Activated naive CD4-positive, alpha-beta T cell treated with anti-CD3 and anti-CD28 coated beads for 36 hours (primary cell): ENCODE measurements at regions of chr12 and their contacts with region 1.

Region 1: DNA sequence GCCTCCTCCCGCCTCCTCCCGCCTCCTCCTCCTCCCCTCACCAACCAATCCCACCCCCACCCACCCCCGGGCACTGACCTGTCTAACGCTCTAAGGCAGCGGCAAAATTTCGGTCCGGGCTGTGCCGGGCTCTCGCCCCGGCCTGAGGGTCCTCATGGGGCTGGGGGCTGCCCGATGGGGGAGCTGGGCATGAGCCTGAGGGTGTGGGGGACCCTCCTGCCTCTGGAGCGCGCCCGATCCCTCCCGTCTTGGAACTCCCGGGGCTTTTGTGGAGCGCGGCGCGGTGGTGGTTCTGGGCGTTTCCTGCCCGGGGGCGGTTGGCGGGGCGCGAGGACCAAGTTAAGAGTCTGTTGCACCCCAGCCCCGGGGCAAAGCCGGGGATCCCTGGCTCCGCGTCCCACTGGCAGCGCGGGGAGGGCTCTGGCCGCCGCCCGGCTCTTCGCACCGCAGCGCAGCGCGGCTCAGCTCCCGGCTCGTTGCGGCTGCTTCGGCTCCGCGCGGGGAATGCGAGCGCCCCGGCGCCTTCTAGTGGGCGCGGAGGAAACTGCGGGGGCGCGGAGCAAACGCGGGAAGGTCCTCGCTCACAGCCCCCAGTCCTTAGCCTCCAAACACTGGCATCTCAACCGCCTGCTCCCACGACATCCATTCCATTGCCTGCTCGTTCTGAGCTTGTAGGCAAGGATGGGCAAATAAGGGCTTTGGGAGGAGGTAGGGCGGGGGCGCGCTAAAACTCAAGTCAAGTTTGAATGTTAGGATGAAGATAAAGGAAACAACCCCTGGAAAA is at the start of gene B4GALNT1:
- DNase-seq: peak; percentile 65
- H3K4me3 Mint-ChIP-seq: peak within 1 kb of the TSS; percentile 73
- H3K27ac Mint-ChIP-seq: no peak within 1 kb of the TSS
- H3K4me1 Mint-ChIP-seq: peaks cover 8% of the 10 kb centered on the region
- H3K27me3 Mint-ChIP-seq: peaks cover 52% of the 10 kb centered on the region
- total RNA-seq, gene B4GALNT1: 1.4 to 1.8 TPM

Region 2: DNA sequence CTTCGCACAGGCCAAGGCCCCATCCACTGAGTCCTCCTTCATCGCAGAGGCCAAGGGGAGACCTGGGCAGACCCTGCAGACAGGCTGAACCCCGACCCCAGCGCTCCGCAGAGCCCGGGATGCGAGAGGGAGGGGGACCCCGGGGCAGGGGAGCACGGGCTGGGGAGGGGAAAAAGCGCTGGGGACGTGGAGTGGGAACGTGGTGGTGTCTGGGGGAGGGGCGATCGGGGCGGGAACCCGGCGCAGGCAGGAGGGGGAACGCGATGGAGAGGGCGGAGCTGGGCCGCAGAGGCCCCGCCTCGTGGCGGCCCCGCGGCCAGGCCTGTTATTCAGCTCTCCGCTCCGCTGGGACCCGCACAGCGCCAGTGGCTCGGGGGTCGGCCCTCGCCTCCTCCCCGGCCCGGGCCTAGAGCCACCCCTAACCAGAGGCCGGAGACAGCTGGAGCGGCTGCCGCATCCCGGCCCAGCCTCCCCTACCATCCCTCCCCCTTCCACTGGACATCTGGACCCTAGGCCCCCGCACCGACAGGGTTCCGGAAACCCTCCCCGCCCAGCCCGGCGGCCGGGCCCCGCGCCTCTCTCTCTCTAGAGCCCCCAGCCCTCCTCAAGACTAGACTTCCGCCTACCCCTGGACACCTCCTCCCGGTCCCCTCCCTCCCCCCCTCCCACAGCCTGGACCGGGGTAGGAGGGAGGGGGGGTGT is 21.6 kb before region 1 on chr12 and contains the start of gene ARHGEF25:
- CTCF ChIA-PET with region 1: interaction called, 6 read pairs
- intact Hi-C with region 1: loop called (anchors 2 kb)
- DNase-seq: peak; percentile 58
- H3K4me3 Mint-ChIP-seq: peak within 1 kb of the TSS; percentile 65
- H3K27ac Mint-ChIP-seq: no peak within 1 kb of the TSS
- H3K4me1 Mint-ChIP-seq: peaks cover 9% of the 10 kb centered on the region
- H3K27me3 Mint-ChIP-seq: peaks cover 19% of the 10 kb centered on the region
- total RNA-seq, gene ARHGEF25: 1.4 to 1.5 TPM

Region 3: DNA sequence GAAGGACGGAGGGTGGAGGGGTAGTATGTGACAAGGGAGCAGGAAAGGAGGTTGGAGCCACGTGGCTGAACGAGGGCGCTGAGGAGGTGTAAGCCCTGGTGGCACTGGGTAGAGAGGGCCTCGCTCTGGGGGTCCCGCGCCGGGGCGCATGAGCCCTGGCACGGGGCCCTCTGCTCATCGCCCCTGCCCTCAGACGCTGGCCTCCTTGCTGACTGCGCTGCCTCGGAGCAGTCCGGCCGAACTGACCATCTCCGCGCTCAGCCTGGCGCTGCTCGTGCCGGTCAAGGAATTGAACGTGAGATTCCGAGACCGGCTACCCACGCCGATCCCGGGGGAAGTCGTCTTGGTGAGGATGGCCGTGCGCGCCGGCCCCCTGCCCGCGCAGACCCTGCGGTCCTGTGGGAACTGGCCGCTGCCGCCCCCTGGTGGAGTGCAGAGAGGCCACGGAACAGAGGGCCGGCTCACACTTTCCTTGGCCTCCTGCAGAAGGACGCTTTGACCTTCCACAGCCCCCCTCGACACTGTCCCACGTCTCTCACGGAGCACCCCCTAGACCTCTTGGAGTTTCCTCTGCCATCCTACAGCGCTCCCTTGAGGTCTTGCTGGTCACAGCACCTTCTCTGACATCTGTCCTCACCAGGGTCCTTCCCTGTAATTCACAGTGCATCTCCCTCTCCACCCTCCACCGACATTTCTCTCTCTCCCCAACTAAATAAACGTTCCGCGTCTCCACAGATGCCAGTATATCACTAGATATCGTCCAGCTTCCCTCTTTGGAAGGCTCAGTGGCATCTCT is 11.2 kb before region 1 on chr12:
- CTCF ChIA-PET with region 1: interaction called, 6 read pairs
- intact Hi-C with region 1: loop called (anchors 1 kb)
- DNase-seq: peak; percentile 65
- H3K4me3 Mint-ChIP-seq: peak overlapping the region; percentile 71
- H3K27ac Mint-ChIP-seq: no peak overlapping the region
- H3K4me1 Mint-ChIP-seq: peaks cover 27% of the 10 kb centered on the region
- H3K27me3 Mint-ChIP-seq: peaks cover 86% of the 10 kb centered on the region

Region 4: GRCh38 chr12:57657744-57658143 is 24.9 kb after region 1 on chr12:
- CTCF ChIA-PET with region 1: interaction called, 12 read pairs
- intact Hi-C with region 1: no loop called
- DNase-seq: no peak
- H3K4me3 Mint-ChIP-seq: no peak overlapping the region
- H3K27ac Mint-ChIP-seq: no peak overlapping the region
- H3K4me1 Mint-ChIP-seq: no peaks in the 10 kb centered on the region
- H3K27me3 Mint-ChIP-seq: peaks cover 2% of the 10 kb centered on the region

Region 5: GRCh38 chr12:57693659-57694458 is 61.0 kb after region 1 on chr12 and contains the start of gene OS9:
- CTCF ChIA-PET with region 1: interaction called, 7 read pairs
- intact Hi-C with region 1: loop called (anchors 1 kb)
- DNase-seq: peak; percentile 99
- H3K4me3 Mint-ChIP-seq: no peak within 1 kb of the TSS
- H3K27ac Mint-ChIP-seq: no peak within 1 kb of the TSS
- H3K4me1 Mint-ChIP-seq: peaks cover 3% of the 10 kb centered on the region
- H3K27me3 Mint-ChIP-seq: no peaks in the 10 kb centered on the region
- total RNA-seq, gene OS9: 60.7 to 60.9 TPM

Region 6: DNA sequence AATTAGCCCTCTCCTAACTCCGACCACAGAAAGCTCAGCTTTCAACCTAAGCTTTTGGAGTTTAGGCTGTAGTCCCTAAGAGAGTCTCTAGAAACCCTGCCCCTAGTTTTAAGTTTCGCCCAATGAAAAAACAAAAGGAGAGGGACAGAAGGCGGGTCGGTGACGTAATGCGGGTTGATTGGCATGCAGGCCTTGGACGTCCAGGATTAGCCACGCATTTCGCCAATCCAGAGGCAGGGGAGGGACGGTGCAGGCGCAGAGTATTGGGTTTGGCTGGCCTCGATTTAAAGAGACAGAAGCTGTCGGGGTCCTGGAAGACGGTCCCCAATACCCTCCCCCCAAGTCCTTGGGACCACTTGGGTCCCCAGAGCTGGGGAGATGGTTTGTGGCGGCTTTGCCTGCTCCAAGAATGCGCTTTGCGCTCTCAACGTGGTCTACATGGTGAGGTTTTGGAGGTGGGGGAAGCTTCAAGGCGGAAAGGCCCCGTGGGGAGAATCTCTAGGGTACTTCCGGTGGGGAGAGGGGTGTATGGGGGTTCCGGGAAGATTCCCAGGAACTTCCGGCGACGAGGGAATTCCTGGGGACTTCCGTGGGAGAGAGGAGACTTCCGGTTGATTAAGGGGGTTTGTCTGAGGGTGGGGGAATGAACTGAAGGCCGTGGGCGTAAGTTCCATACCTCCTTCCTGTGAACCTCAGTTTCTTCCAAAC is 112.0 kb after region 1 on chr12 and contains the start of gene TSPAN31:
- CTCF ChIA-PET with region 1: interaction called, 3 read pairs
- intact Hi-C with region 1: loop called (anchors 1 kb)
- DNase-seq: peak; percentile 99
- H3K4me3 Mint-ChIP-seq: peak within 1 kb of the TSS; percentile 85
- H3K27ac Mint-ChIP-seq: peak within 1 kb of the TSS; percentile 94
- H3K4me1 Mint-ChIP-seq: peaks cover 40% of the 10 kb centered on the region
- H3K27me3 Mint-ChIP-seq: no peaks in the 10 kb centered on the region
- total RNA-seq, gene TSPAN31: 6.4 to 7.7 TPM